Activated T-helper 1 cell treated with anti-CD3 and anti-CD28 coated beads, Interleukin-12 subunit alpha, Interleukin-12 subunit beta, Interleukin-2, Interleukin-4 antibody, amounts not matched to agents 30 ng/mL and 10 ng/mL and 1 ng/mL, durations not matched to agents 14 hours and 24 hours and 36 hours (primary cell): ENCODE measurements at regions of chr20 and their contacts with region 1.

Region 1: DNA sequence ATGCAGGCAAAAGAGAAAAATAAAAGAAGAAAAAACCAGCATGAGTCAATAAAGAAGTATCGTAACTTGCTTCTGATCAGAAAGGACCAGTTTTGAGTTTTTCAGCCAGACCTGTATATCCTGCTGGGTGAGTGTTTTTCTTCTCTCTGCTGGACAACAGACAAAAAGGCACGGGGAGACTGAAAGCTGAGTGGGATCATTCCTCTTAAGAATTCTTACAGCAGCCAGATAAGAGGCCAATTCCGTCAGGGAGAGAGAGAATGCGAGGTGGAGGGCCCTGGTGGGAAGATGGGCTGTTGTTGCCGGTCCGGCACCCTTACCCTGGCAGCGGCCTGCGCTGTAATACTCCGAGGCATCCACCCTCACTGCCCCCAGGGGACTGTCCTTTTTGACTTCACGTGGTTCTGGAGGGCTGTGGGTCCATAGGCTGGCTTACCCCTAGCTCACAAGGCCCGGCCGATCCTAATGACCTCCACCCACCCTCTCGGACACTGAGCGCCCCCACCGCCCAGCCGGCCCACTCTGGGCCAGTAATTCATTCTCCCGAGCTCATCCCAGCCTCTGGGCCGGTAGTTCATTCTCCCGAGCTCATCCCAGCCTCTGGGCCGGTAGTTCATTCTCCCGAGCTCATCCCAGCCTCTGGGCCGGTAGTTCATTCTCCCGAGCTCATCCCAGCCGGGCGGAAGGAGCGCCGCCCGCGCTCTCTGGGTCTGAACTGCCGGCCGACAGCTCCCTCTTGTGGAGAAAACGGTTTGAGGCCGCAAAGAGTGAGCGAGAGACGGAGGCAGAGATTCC is 118.3 kb upstream of the SIRPA start:
- DNase-seq: peak; percentile 74
- H3K4me3 Mint-ChIP-seq: peak overlapping the region; percentile 80
- H3K27ac Mint-ChIP-seq: peak overlapping the region; percentile 27
- H3K4me1 Mint-ChIP-seq: peaks cover 17% of the 10 kb centered on the region
- H3K27me3 Mint-ChIP-seq: peaks cover 11% of the 10 kb centered on the region

Region 2: DNA sequence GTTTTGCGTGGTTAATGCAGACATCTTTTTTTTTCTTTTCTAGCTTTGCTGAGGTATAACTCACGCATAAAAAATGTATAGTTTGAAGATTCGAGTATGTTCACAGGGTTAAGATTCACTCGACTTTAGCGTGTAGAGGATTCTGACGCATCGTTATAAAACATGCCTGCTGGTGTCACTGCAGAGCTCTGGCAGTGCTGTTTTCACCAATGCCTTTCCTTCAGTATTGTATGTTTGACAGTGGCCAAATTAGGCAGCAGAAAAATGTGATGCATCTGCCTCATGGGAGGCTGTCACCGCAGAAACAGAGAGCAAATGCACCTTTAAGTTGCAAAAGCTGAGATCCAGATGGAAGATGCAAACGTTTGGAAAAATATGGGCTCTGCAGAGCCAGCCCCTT is 267.6 kb before region 1 on chr20:
- intact Hi-C with region 1: loop called (anchors 1 kb)
- DNase-seq: no peak
- H3K4me3 Mint-ChIP-seq: no peak overlapping the region
- H3K27ac Mint-ChIP-seq: no peak overlapping the region
- H3K4me1 Mint-ChIP-seq: no peaks in the 10 kb centered on the region
- H3K27me3 Mint-ChIP-seq: peaks cover 5% of the 10 kb centered on the region

Region 3: GRCh38 chr20:1533059-1533458 is 243.8 kb before region 1 on chr20:
- intact Hi-C with region 1: loop called (anchors 2 kb)
- DNase-seq: no peak
- H3K4me3 Mint-ChIP-seq: no peak overlapping the region
- H3K27ac Mint-ChIP-seq: no peak overlapping the region
- H3K4me1 Mint-ChIP-seq: peaks cover 7% of the 10 kb centered on the region
- H3K27me3 Mint-ChIP-seq: peaks cover 6% of the 10 kb centered on the region

Region 4: DNA sequence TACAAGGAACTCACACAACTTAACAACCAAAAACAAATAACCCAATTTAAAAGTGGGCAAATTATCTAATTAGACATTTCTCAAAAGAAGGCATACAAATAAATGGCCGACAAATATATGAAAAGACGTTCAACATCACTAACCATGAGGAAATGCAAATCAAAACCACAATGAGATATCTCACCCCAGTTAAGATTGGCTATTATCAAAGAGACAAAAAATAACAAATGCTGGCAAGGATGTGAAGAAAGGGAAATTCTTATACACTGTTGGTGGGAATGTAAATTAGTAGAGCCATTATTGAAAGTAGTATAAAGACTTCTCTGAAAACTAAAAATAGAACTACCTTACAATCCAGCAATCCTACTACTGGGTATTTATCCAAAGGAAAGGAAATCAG is 22.6 kb before region 1 on chr20:
- intact Hi-C with region 1: no loop called
- DNase-seq: no peak
- H3K4me3 Mint-ChIP-seq: no peak overlapping the region
- H3K27ac Mint-ChIP-seq: no peak overlapping the region
- H3K4me1 Mint-ChIP-seq: no peaks in the 10 kb centered on the region
- H3K27me3 Mint-ChIP-seq: peaks cover 29% of the 10 kb centered on the region

Region 5: GRCh38 chr20:1764136-1765033 is 12.5 kb before region 1 on chr20:
- intact Hi-C with region 1: loop called (anchors 1 kb)
- DNase-seq: peak; percentile 18
- H3K4me3 Mint-ChIP-seq: no peak overlapping the region
- H3K27ac Mint-ChIP-seq: no peak overlapping the region
- H3K4me1 Mint-ChIP-seq: no peaks in the 10 kb centered on the region
- H3K27me3 Mint-ChIP-seq: peaks cover 16% of the 10 kb centered on the region

Region 6: GRCh38 chr20:1810926-1811620 is 34.2 kb after region 1 on chr20:
- intact Hi-C with region 1: no loop called
- DNase-seq: no peak
- H3K4me3 Mint-ChIP-seq: no peak overlapping the region
- H3K27ac Mint-ChIP-seq: no peak overlapping the region
- H3K4me1 Mint-ChIP-seq: no peaks in the 10 kb centered on the region
- H3K27me3 Mint-ChIP-seq: peaks cover 22% of the 10 kb centered on the region

Region 7: GRCh38 chr20:1934721-1935573 is 158.1 kb after region 1 on chr20:
- intact Hi-C with region 1: no loop called
- DNase-seq: no peak
- H3K4me3 Mint-ChIP-seq: no peak overlapping the region
- H3K27ac Mint-ChIP-seq: no peak overlapping the region
- H3K4me1 Mint-ChIP-seq: no peaks in the 10 kb centered on the region
- H3K27me3 Mint-ChIP-seq: peaks cover 3% of the 10 kb centered on the region